Naive thymus-derived CD4-positive, alpha-beta T cell (primary cell): ENCODE measurements at regions of chr7 and their contacts with region 1.

Region 1: DNA sequence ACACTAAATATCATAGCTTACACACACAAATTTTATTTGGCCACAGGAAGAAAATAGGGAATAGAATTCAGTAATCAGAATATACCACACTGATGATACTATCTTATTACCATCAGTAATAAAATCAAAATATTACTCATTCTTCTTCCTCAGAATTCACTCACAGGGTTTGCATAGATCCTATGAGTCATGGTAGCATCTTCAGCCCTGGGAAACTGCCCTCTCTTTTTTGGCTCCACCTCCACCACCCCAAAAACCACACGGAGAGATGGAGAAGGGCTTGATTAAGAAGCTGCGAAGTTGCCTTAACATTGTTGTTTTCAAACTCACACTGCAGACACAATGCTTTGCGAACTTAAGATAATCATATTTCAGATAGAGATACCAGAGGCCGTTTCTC is 154.1 kb upstream of the AHR start:
- DNase-seq: peak in 1 of 9 donors; percentile 69
- ATAC-seq: peak; percentile 82
- H3K4me3 ChIP-seq: peak overlapping the region; percentile 6
- H3K4me3 Mint-ChIP-seq: peak overlapping the region in 9 of 10 donors; percentile 26 to 85 (median 49)
- H3K27ac ChIP-seq: no peak overlapping the region
- H3K27ac Mint-ChIP-seq: peak overlapping the region in 8 of 9 donors; percentile 0 to 91 (median 55)
- H3K4me1 ChIP-seq: peaks cover 26 to 35% of the 10 kb centered on the region in 2 donors
- H3K4me1 Mint-ChIP-seq: peaks cover 21 to 57% (median 46%) of the 10 kb centered on the region in 7 donors
- H3K27me3 ChIP-seq: no peaks in the 10 kb centered on the region
- H3K27me3 Mint-ChIP-seq: no peaks in the 10 kb centered on the region

Region 2: DNA sequence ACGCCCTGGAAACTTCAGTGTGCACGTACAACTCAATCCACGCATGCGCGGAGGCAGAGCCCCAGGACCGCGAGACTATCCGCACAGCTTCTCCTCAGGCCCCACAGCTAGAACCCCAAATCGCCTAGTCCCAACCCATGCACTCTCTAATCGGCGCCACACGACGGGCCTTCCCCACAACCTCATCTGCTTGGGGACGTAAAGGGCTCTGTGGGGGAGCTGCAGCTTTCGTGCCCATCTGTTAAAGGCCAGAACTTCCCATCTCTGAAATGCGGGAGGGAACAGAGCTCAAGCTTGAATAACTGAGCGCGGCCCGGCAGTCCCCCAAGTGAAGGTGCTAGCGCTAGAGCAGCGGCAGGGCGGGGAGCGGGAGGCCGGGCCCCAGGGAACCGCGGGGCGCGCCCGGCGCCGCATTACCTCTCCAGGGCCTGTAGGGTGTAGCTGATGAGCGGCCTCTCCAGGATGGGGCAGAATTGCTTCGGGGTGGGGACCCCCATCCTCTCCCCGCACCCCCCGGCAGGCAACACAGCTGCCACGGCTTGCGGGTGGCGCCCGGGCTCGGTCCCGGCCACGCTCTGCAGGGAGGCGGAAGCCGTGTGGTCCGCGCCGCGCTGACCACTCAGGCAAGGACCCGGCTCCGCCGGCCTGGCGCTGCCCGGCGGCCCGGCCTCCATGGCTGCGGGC is 723.5 kb before region 1 on chr7:
- CTCF ChIA-PET with region 1: no interaction called
- POLR2A ChIA-PET with region 1: no interaction called
- intact Hi-C with region 1: loop called in 1 of 2 experiments (anchors 5 kb)
- DNase-seq: peak; percentile 71 to 93 (median 88)
- ATAC-seq: peak; percentile 93
- H3K4me3 ChIP-seq: peak overlapping the region; percentile 93
- H3K4me3 Mint-ChIP-seq: peak overlapping the region; percentile 82 to 96 (median 88)
- H3K27ac ChIP-seq: peak overlapping the region; percentile 78
- H3K27ac Mint-ChIP-seq: peak overlapping the region; percentile 84 to 98 (median 92)
- H3K4me1 ChIP-seq: peaks cover 6 to 9% of the 10 kb centered on the region in 2 donors
- H3K4me1 Mint-ChIP-seq: peaks cover 7 to 23% (median 15%) of the 10 kb centered on the region in 7 donors
- H3K27me3 ChIP-seq: no peaks in the 10 kb centered on the region
- H3K27me3 Mint-ChIP-seq: peaks cover 0 to 14% (median 0%) of the 10 kb centered on the region in 5 donors

Region 3: DNA sequence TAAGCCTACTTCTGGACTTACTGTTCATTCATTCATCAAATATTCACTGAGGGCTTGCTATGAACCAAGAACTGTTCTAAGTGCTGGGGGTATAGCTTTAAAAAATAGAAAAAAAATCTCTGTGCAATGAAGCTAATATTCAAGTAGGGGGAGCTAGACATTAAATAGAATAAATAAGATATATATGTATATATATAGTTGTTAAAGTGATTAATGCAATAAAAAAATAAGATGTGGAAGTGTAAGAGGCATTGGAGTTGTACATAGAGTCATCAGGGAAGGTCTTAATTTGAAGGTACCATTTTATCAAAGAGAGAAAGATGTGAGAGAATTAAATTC is 81.3 kb before region 1 on chr7:
- CTCF ChIA-PET with region 1: no interaction called
- POLR2A ChIA-PET with region 1: interaction called, 3 read pairs
- intact Hi-C with region 1: loop called in 1 of 2 experiments (anchors 5 kb)
- DNase-seq: peak in 1 of 9 donors; percentile 2
- ATAC-seq: no peak
- H3K4me3 ChIP-seq: no peak overlapping the region
- H3K4me3 Mint-ChIP-seq: no peak overlapping the region
- H3K27ac ChIP-seq: no peak overlapping the region
- H3K27ac Mint-ChIP-seq: no peak overlapping the region
- H3K4me1 ChIP-seq: no peaks in the 10 kb centered on the region
- H3K4me1 Mint-ChIP-seq: peaks cover 0 to 26% (median 0%) of the 10 kb centered on the region in 7 donors
- H3K27me3 ChIP-seq: no peaks in the 10 kb centered on the region
- H3K27me3 Mint-ChIP-seq: peaks cover 0 to 5% (median 0%) of the 10 kb centered on the region in 5 donors

Region 4: DNA sequence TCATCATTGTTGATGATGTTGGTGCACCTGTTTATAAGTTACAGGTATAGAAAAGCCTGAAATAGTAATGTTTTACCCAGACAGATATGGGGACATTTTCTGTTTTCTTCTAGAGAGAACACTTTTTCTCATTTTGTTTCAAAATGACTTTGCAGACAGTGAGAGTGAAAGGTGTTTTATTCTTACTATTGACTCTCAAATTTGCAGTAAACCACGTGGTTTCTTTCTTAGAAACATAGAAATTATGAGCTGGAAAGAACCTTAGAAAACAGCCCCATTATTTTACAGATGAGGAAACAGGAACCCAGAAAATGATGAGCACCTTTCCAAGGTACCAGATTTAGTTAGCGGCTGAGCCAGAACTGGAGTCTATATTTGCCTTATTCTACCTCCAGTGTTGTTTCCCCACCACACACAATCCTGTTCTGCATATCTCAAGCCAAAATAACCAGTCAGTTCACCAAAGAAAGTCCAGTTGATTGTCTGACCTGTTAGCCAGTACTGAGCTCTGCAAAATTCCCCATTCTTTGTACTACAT is 15.2 kb after region 1 on chr7:
- CTCF ChIA-PET with region 1: no interaction called
- POLR2A ChIA-PET with region 1: no interaction called
- intact Hi-C with region 1: loop called in 1 of 2 experiments (anchors 1 kb)
- DNase-seq: no peak
- ATAC-seq: no peak
- H3K4me3 ChIP-seq: no peak overlapping the region
- H3K4me3 Mint-ChIP-seq: peak overlapping the region in 1 of 10 donors; percentile 48
- H3K27ac ChIP-seq: no peak overlapping the region
- H3K27ac Mint-ChIP-seq: peak overlapping the region in 4 of 9 donors; percentile 25 to 80 (median 44)
- H3K4me1 ChIP-seq: no peaks in the 10 kb centered on the region
- H3K4me1 Mint-ChIP-seq: peaks cover 0 to 49% (median 7%) of the 10 kb centered on the region in 7 donors
- H3K27me3 ChIP-seq: no peaks in the 10 kb centered on the region
- H3K27me3 Mint-ChIP-seq: peaks cover 0 to 6% (median 0%) of the 10 kb centered on the region in 5 donors

Region 5: DNA sequence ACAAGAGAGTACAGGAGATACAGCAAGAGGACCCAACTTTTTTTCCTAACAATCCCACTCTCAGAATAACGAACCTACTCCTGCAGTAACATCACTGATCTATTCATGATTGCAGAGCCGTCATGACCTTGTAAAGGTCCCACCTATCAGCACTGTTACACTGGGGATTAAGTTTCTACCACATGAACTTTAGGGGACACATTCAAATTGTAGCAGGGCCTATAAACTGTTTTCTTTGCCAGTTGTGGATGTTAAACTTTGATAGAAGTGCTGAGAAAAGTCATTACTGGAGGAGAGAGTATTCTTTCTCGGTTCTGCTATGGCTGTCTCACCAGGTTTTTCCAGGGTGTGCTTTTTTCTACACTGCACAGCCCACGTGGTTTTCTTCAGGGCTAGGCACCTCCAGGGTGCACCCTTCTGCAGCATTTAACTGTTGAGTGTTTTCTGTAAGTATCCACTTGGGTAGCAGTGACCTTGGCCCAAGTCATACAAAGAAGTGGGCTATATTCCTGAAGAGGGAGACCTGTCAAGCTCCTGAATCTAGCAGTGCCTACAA is 22.6 kb after region 1 on chr7:
- CTCF ChIA-PET with region 1: no interaction called
- POLR2A ChIA-PET with region 1: no interaction called
- intact Hi-C with region 1: loop called in 1 of 2 experiments (anchors 2 kb)
- DNase-seq: peak in 1 of 9 donors; percentile 28
- ATAC-seq: no peak
- H3K4me3 ChIP-seq: no peak overlapping the region
- H3K4me3 Mint-ChIP-seq: no peak overlapping the region
- H3K27ac ChIP-seq: no peak overlapping the region
- H3K27ac Mint-ChIP-seq: peak overlapping the region in 1 of 9 donors; percentile 9
- H3K4me1 ChIP-seq: no peaks in the 10 kb centered on the region
- H3K4me1 Mint-ChIP-seq: peaks cover 0 to 37% (median 13%) of the 10 kb centered on the region in 7 donors
- H3K27me3 ChIP-seq: no peaks in the 10 kb centered on the region
- H3K27me3 Mint-ChIP-seq: no peaks in the 10 kb centered on the region